ENCODE measurements at regions of chr22 and their contacts with region 1.

Region 1: GRCh38 chr22:45994491-45995404 is 17.8 kb upstream of the WNT7B start:
- DNase-seq: peak; percentile 78
- H3K4me3 Mint-ChIP-seq: no peak overlapping the region
- H3K27ac Mint-ChIP-seq: no peak overlapping the region
- H3K4me1 Mint-ChIP-seq: no peaks in the 10 kb centered on the region
- H3K27me3 Mint-ChIP-seq: no peaks in the 10 kb centered on the region
- CTCF ChIP-seq: peak; percentile 96

Region 2: GRCh38 chr22:45984316-45984916 is 10.3 kb before region 1 on chr22:
- CTCF ChIA-PET with region 1: interaction called, 21 read pairs
- POLR2A ChIA-PET with region 1: no interaction called
- intact Hi-C with region 1: no loop called
- DNase-seq: no peak
- H3K4me3 Mint-ChIP-seq: no peak overlapping the region
- H3K27ac Mint-ChIP-seq: no peak overlapping the region
- H3K4me1 Mint-ChIP-seq: no peaks in the 10 kb centered on the region
- H3K27me3 Mint-ChIP-seq: peaks cover 20% of the 10 kb centered on the region
- CTCF ChIP-seq: no peak

Region 3: DNA sequence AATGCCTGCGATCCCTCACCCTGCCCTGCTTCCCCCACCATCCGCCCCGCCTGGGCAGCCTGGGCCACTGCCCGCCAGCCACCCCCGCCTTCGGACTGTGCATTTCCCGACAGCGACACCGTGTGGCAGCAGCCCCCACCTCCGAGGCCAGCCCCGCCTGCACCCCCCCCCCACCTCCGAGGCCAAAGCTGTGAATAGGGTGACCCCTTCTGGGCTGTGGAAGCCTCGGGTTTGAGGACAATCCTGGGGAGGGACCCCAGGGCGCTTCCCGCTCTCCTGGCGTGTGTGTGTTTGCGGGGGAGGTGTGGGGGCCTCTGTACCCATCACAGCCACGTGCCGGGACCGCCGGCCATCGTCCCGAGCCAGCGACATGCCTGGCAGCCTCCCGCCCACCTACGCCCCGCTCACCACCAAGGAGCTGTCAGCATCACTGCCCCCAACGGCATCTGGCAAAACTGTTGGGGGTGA is 121.8 kb after region 1 on chr22:
- CTCF ChIA-PET with region 1: interaction called, 55 read pairs
- POLR2A ChIA-PET with region 1: no interaction called
- intact Hi-C with region 1: no loop called
- DNase-seq: peak; percentile 83
- H3K4me3 Mint-ChIP-seq: no peak overlapping the region
- H3K27ac Mint-ChIP-seq: peak overlapping the region; percentile 35
- H3K4me1 Mint-ChIP-seq: peaks cover 7% of the 10 kb centered on the region
- H3K27me3 Mint-ChIP-seq: no peaks in the 10 kb centered on the region
- CTCF ChIP-seq: peak; percentile 43

Region 4: GRCh38 chr22:46309526-46310085 is 314.9 kb after region 1 on chr22:
- CTCF ChIA-PET with region 1: interaction called, 15 read pairs
- POLR2A ChIA-PET with region 1: no interaction called
- intact Hi-C with region 1: loop called (anchors 1 kb)
- DNase-seq: no peak
- H3K4me3 Mint-ChIP-seq: no peak overlapping the region
- H3K27ac Mint-ChIP-seq: no peak overlapping the region
- H3K4me1 Mint-ChIP-seq: no peaks in the 10 kb centered on the region
- H3K27me3 Mint-ChIP-seq: no peaks in the 10 kb centered on the region
- CTCF ChIP-seq: no peak

Region 5: DNA sequence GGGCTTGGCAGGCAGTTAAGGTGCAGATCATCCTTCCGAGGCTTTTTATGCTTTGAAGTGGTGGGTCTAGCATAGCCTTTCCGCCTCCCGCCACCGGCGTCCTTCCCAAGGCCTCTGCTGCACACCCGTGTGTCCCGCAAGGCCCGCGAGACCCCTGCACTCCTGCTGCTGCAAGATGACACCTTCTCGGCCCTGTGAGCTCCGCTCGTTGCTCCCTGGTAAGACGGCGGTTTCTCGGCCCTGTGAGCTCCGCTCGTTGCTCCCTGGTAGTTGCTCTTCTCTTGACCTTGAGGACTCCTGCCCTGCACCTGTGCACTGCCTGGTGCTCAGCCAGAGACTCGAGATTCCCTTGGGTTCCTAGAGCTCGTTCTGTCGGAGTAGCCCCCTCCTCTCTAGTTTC is 322.9 kb after region 1 on chr22:
- CTCF ChIA-PET with region 1: interaction called, 18 read pairs
- POLR2A ChIA-PET with region 1: no interaction called
- intact Hi-C with region 1: loop called (anchors 1 kb)
- DNase-seq: no peak
- H3K4me3 Mint-ChIP-seq: no peak overlapping the region
- H3K27ac Mint-ChIP-seq: no peak overlapping the region
- H3K4me1 Mint-ChIP-seq: no peaks in the 10 kb centered on the region
- H3K27me3 Mint-ChIP-seq: no peaks in the 10 kb centered on the region
- CTCF ChIP-seq: no peak

Region 6: DNA sequence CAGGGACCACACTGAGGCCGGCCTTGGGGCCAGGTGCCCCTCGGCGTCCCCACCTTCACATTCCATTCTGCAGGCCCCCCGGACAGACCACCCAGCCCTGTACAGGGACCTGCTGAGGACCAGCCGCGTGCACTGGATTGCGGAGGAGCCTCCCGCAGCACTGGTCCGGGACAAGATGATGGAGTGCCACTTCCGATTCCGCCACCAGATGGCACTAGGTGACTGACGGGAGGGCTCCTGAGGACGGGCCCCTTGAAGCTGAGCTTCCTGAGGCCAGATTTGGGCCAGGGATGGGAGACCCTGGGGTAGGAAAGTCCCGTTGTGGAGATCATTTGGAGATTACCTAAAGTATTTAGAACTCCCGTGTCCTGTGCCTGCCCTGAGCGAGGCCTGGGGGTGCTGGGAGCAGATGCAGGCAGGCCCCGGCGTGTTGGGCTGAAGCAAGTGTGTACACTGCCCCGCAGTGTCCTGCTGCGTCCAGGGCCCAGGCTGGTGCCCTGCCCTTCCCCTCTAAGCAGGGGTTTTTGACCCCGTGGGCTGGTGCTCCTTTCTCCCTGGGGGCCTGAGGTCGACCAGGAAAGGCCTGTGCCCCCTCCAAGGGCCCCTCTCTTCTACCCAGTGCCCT is 360.7 kb after region 1 on chr22:
- CTCF ChIA-PET with region 1: no interaction called
- POLR2A ChIA-PET with region 1: no interaction called
- intact Hi-C with region 1: no loop called
- DNase-seq: peak; percentile 68
- H3K4me3 Mint-ChIP-seq: no peak overlapping the region
- H3K27ac Mint-ChIP-seq: peak overlapping the region; percentile 60
- H3K4me1 Mint-ChIP-seq: peaks cover 16% of the 10 kb centered on the region
- H3K27me3 Mint-ChIP-seq: no peaks in the 10 kb centered on the region
- CTCF ChIP-seq: peak; percentile 83